B cell (primary cell): ENCODE measurements at regions of chr5 and their contacts with region 1.

Region 1: DNA sequence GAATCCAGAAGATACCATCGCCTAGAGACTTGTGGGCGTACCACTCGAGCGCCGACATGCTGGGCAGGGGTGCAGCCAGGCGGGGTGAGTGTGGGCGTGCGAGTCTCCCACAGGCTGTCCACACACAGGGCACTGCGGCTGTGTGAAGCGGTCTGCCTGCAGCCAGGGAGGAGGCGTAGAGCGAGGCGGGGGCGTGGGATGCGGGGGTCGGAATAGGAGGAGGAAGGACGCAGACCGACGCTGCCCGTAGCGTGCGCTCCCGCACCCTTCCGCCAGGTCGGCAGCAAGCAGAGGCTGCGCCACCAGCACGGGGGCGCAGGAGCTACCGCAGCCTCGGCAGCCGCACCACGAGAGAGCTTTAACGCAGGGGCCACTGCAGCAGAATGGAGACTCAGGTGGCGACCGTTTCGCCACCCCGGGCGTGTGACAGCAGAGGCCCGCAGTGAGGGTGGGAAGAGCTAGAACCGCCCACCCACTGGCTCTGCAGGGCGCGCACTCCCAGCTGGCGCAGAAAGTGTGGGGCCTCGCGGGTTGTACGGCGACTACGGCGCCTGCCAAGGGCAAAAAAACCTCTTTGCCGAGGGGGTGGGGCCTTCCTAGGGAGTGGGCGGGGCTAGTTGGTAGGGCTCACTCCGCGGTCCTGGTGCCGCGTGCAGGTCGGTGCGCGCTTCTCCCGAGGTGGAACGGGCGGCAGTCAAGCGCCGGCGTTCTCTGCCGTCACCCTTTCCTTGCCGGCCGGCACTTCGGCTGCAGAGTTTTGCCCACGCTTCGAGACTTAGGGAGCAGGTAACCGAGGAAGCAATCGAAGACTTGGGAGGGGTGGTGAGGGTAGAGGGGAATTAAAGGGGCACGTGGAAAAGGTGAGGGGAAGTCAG is at the starts of genes MBLAC2 and POLR3G:
- DNase-seq: peak; percentile 95
- ATAC-seq: peak; percentile 92
- H3K4me3 ChIP-seq: peak within 1 kb of the TSS; percentile 67 to 94 (median 86)
- H3K4me3 Mint-ChIP-seq: peak within 1 kb of the TSS; percentile 96
- H3K27ac ChIP-seq: peak within 1 kb of the TSS; percentile 53 to 55
- H3K27ac Mint-ChIP-seq: peak within 1 kb of the TSS; percentile 94
- H3K4me1 ChIP-seq: peaks cover 11 to 15% of the 10 kb centered on the region in 2 donors
- H3K4me1 Mint-ChIP-seq: peaks cover 24% of the 10 kb centered on the region
- H3K27me3 ChIP-seq: no peaks in the 10 kb centered on the region
- H3K27me3 Mint-ChIP-seq: no peaks in the 10 kb centered on the region
- CTCF ChIP-seq: peak; percentile 64
- total RNA-seq, gene MBLAC2: 11.5 and 13.3 TPM in 2 replicates
- total RNA-seq, gene POLR3G: 2.0 and 2.3 TPM in 2 replicates

Region 2: GRCh38 chr5:90529194-90529938 is 54.9 kb after region 1 on chr5 and contains the start of gene LYSMD3:
- CTCF ChIA-PET with region 1: interaction called, 10 read pairs
- POLR2A ChIA-PET with region 1: interaction called, 4 read pairs
- intact Hi-C with region 1: loop called (anchors 1 kb)
- DNase-seq: peak; percentile 97
- ATAC-seq: peak; percentile 94
- H3K4me3 ChIP-seq: peak within 1 kb of the TSS; percentile 78 to 97 (median 83)
- H3K4me3 Mint-ChIP-seq: peak within 1 kb of the TSS; percentile 99
- H3K27ac ChIP-seq: peak within 1 kb of the TSS; percentile 88 to 94
- H3K27ac Mint-ChIP-seq: peak within 1 kb of the TSS; percentile 99
- H3K4me1 ChIP-seq: peaks cover 15 to 24% of the 10 kb centered on the region in 2 donors
- H3K4me1 Mint-ChIP-seq: peaks cover 36% of the 10 kb centered on the region
- H3K27me3 ChIP-seq: peaks cover 0 to 22% (median 15%) of the 10 kb centered on the region in 4 experiments
- H3K27me3 Mint-ChIP-seq: peaks cover 24% of the 10 kb centered on the region
- CTCF ChIP-seq: no peak
- total RNA-seq, gene LYSMD3: 23.7 and 25.2 TPM in 2 replicates

Region 3: DNA sequence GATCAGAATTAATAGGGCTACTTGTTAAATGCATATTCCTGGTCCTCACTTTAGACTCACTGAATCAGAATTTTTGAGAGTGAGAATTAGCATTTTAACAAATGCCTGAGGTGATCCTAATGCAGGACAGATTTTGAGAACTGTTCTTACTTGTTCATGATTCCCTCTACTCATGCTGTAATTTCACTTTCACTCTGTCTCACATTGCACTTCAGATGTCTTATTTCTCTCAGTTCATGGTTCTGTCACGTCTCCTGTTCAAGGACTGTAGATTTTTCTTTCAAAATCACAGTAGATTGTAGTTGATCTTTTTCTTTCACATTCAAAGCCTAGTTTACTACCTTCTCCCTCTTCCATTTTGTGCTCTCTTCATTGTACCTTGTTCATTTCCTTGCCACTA is 138.4 kb after region 1 on chr5:
- CTCF ChIA-PET with region 1: no interaction called
- POLR2A ChIA-PET with region 1: no interaction called
- intact Hi-C with region 1: no loop called
- DNase-seq: no peak
- ATAC-seq: no peak
- H3K4me3 ChIP-seq: no peak overlapping the region
- H3K4me3 Mint-ChIP-seq: no peak overlapping the region
- H3K27ac ChIP-seq: no peak overlapping the region
- H3K27ac Mint-ChIP-seq: no peak overlapping the region
- H3K4me1 ChIP-seq: no peaks in the 10 kb centered on the region
- H3K4me1 Mint-ChIP-seq: no peaks in the 10 kb centered on the region
- H3K27me3 ChIP-seq: no peaks in the 10 kb centered on the region
- H3K27me3 Mint-ChIP-seq: peaks cover 3% of the 10 kb centered on the region
- CTCF ChIP-seq: no peak